ENCODE measurements at regions of chr13 and their contacts with region 1.

Region 1: DNA sequence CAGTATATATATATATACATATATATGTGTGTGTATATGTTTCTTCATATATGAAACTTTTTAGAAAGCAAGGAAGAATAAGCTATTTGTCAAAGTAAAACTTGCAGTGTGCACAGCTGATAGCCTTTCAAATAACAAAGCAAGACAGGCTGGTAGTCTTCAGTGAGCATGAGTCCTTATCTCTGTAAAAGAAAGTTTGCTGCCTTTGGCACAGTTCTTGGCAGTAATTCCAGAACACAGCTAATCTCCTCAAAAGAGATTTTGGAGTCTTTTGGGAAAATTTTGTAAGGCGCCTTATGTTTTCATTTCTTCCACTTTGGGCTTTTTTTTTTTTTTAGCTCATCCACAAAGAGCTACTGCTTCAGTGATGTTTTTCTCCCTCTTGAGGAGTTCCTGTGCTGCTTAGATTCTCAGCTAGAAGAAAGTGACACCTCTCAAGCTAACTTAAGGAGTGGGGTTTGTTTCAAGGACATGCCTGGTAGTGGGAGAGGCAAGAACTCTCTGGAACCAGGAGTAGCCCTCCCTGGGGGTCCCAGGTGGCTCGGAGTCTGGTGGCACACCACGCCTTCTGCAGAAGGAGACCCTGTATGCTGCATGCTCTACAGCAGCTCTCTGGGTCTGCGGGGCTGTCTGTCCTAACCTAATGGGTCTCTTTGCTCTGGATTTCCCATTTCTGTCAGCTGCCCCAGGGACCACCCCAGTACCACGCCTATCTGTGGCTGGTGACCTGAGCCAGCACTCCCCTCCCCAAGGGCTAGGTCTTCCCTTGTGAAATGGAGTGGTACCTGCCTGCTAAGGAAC is 58.8 kb downstream of the TNFRSF19 start:
- DNase-seq: no peak
- H3K4me3 ChIP-seq: no peak overlapping the region
- H3K27ac ChIP-seq: peak overlapping the region; percentile 51 to 60
- H3K4me1 ChIP-seq: peaks cover 20% of the 10 kb centered on the region
- H3K27me3 ChIP-seq: no peaks in the 10 kb centered on the region
- CTCF ChIP-seq: no peak
- POLR2A ChIP-seq: no peak

Region 2: DNA sequence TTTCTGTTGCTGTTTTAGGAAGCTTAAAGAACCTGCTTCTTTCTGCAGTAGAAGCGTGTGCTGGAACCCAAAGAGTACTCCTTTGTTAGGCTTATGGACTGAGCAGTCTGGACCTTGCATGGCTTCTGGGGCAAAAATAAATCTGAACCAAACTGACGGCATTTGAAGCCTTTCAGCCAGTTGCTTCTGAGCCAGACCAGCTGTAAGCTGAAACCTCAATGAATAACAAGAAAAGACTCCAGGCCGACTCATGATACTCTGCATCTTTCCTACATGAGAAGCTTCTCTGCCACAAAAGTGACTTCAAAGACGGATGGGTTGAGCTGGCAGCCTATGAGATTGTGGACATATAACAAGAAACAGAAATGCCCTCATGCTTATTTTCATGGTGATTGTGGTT is 44.4 kb after region 1 on chr13:
- intact Hi-C with region 1: loop called (anchors 5 kb)
- DNase-seq: no peak
- H3K4me3 ChIP-seq: no peak overlapping the region
- H3K27ac ChIP-seq: no peak overlapping the region
- H3K4me1 ChIP-seq: no peaks in the 10 kb centered on the region
- H3K27me3 ChIP-seq: no peaks in the 10 kb centered on the region
- CTCF ChIP-seq: no peak
- POLR2A ChIP-seq: no peak

Measured in prostate gland (tissue), 2 donors.